CD14-positive monocyte (primary cell): ENCODE measurements at regions of chr9 and their contacts with region 1.

Region 1: GRCh38 chr9:22452415-22453010 is 5.9 kb downstream of the DMRTA1 start:
- DNase-seq: peak; percentile 17 to 54 (median 34)
- H3K4me3 ChIP-seq: no peak overlapping the region
- H3K4me3 Mint-ChIP-seq: no peak overlapping the region
- H3K27ac ChIP-seq: no peak overlapping the region
- H3K27ac Mint-ChIP-seq: no peak overlapping the region
- H3K4me1 ChIP-seq: peaks cover 0 to 3% of the 10 kb centered on the region in 2 donors
- H3K4me1 Mint-ChIP-seq: peaks cover 3% of the 10 kb centered on the region
- H3K27me3 ChIP-seq: peaks cover 24 to 29% of the 10 kb centered on the region in 2 donors
- H3K27me3 Mint-ChIP-seq: peaks cover 19 to 23% (median 20%) of the 10 kb centered on the region in 3 donors
- CTCF ChIP-seq: peak; percentile 85

Region 2: GRCh38 chr9:22244141-22245011 is 208.1 kb before region 1 on chr9:
- intact Hi-C with region 1: loop called in 1 of 2 experiments (anchors 10 kb)
- DNase-seq: peak; percentile 46 to 62 (median 58)
- H3K4me3 ChIP-seq: peak overlapping the region in 1 of 3 experiments; percentile 17
- H3K4me3 Mint-ChIP-seq: no peak overlapping the region
- H3K27ac ChIP-seq: no peak overlapping the region
- H3K27ac Mint-ChIP-seq: no peak overlapping the region
- H3K4me1 ChIP-seq: peaks cover 18 to 34% of the 10 kb centered on the region in 2 donors
- H3K4me1 Mint-ChIP-seq: peaks cover 24% of the 10 kb centered on the region
- H3K27me3 ChIP-seq: peaks cover 19 to 20% of the 10 kb centered on the region in 2 donors
- H3K27me3 Mint-ChIP-seq: peaks cover 3 to 27% (median 10%) of the 10 kb centered on the region in 3 donors
- CTCF ChIP-seq: peak; percentile 81

Region 3: GRCh38 chr9:22416692-22417060 is 35.8 kb before region 1 on chr9:
- intact Hi-C with region 1: no loop called
- DNase-seq: no peak
- H3K4me3 ChIP-seq: no peak overlapping the region
- H3K4me3 Mint-ChIP-seq: no peak overlapping the region
- H3K27ac ChIP-seq: no peak overlapping the region
- H3K27ac Mint-ChIP-seq: no peak overlapping the region
- H3K4me1 ChIP-seq: no peaks in the 10 kb centered on the region
- H3K4me1 Mint-ChIP-seq: no peaks in the 10 kb centered on the region
- H3K27me3 ChIP-seq: no peaks in the 10 kb centered on the region
- H3K27me3 Mint-ChIP-seq: no peaks in the 10 kb centered on the region
- CTCF ChIP-seq: no peak

Region 4: DNA sequence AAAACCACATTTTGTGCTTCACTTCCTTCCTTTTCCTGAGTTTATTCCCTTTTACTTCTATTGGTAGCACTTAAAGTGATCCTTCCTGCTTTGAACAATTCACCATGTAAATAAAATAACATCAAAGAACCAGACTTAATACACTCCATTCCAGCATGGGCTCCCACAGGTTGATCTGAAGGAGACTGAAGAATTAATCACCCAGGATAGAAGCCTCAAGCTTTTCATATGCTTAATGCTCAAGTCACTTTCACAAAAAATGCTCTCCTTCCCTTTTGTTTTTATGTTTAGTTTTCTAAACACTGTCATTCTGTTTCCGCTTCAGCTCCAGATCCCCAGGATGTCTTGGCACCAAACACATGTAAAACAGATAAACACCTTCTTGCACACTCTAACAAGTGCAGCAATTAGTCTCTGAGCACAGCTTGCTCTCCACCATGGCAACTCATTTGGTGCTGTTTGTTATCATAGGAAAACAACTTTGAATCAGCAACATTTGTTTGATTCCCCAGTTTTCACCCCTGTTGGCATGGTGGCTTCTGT is 31.1 kb after region 1 on chr9:
- intact Hi-C with region 1: no loop called
- DNase-seq: no peak
- H3K4me3 ChIP-seq: no peak overlapping the region
- H3K4me3 Mint-ChIP-seq: no peak overlapping the region
- H3K27ac ChIP-seq: no peak overlapping the region
- H3K27ac Mint-ChIP-seq: no peak overlapping the region
- H3K4me1 ChIP-seq: no peaks in the 10 kb centered on the region
- H3K4me1 Mint-ChIP-seq: no peaks in the 10 kb centered on the region
- H3K27me3 ChIP-seq: no peaks in the 10 kb centered on the region
- H3K27me3 Mint-ChIP-seq: no peaks in the 10 kb centered on the region
- CTCF ChIP-seq: no peak

Region 5: GRCh38 chr9:22512495-22512894 is 60.0 kb after region 1 on chr9:
- intact Hi-C with region 1: no loop called
- DNase-seq: no peak
- H3K4me3 ChIP-seq: no peak overlapping the region
- H3K4me3 Mint-ChIP-seq: no peak overlapping the region
- H3K27ac ChIP-seq: no peak overlapping the region
- H3K27ac Mint-ChIP-seq: no peak overlapping the region
- H3K4me1 ChIP-seq: no peaks in the 10 kb centered on the region
- H3K4me1 Mint-ChIP-seq: no peaks in the 10 kb centered on the region
- H3K27me3 ChIP-seq: no peaks in the 10 kb centered on the region
- H3K27me3 Mint-ChIP-seq: no peaks in the 10 kb centered on the region
- CTCF ChIP-seq: no peak